PC-3 (cell line): ENCODE measurements at regions of chr3 and their contacts with region 1.

Region 1: DNA sequence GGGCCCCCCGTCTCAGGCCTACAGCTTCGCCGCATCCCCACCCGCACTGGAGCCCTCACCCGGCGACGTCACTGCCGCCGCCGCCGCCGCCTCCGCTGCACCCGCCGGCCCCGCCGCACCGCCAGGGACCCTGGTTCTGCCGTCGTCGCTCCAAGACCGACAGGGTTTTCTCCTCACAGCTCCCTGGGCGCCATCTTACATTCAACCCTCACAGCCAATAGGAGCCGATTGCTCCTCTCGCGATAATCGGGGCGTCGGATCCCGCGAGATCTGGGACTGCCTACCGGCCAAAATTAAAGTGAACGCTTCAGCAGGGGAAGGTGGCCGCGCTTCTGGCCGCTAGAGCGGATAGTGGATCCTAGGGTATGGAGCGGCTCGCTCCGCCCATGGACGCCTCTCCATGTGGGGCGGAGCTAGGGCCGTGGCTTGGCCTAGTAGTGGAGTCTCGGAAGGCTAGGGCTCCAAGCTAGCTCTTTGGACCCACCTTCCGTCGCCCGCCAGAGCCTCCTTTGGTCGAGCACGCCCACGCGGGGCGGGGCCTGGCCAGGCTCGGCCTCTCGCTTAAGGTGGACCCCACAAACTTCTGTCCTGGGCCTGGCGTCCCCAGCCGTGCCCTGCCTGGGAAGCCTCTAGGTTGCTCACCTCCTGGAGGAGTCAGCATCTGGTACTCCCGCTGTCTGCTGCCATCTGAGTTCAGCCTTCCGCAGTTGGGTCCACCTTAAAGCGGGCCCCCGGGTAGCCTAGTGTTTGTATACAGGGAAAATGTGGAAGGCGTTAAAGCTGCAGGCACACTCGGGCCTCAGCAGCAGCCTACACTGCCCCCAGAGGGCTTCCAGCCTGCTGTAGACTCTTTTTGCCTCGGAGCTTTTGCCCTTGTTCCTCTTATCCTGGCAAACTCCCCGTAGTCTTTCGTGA is at the start of gene QRICH1:
- DNase-seq: peak; percentile 99
- ATAC-seq: peak; percentile 84
- H3K4me3 ChIP-seq: peak within 1 kb of the TSS; percentile 90
- H3K27ac ChIP-seq: peak within 1 kb of the TSS; percentile 80
- H3K4me1 ChIP-seq: peaks cover 13% of the 10 kb centered on the region
- H3K27me3 ChIP-seq: no peaks in the 10 kb centered on the region
- CTCF ChIP-seq: peak; percentile 62
- total RNA-seq, gene QRICH1: 90.2 and 124 TPM in 2 replicates

Region 2: DNA sequence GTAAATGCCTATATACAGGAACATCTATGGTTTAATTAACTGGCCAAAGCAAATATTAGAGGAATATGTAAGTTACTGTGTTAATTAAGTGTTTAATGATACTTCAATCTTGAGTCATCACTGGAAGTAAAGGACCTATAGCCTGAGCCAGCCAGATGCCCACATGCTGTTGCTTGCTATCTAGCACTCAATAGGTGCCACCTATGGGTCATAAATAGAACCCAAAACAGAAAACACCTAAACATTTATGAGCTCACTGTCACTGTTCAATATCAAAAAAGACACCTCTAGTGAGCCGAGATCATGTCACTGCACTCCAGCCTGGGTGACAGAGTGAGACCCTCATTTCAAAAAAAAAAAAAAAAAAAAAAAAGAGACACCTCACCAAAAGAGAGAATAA is 328.7 kb before region 1 on chr3:
- CTCF ChIA-PET with region 1: interaction called, 15 read pairs
- POLR2A ChIA-PET with region 1: no interaction called
- intact Hi-C with region 1: no loop called
- DNase-seq: peak; percentile 49
- ATAC-seq: peak; percentile 97
- H3K4me3 ChIP-seq: no peak overlapping the region
- H3K27ac ChIP-seq: no peak overlapping the region
- H3K4me1 ChIP-seq: no peaks in the 10 kb centered on the region
- H3K27me3 ChIP-seq: no peaks in the 10 kb centered on the region
- CTCF ChIP-seq: peak; percentile 64

Region 3: GRCh38 chr3:49021813-49022687 is 72.1 kb before region 1 on chr3 and contains the start of gene NDUFAF3:
- CTCF ChIA-PET with region 1: interaction called, 6 read pairs
- POLR2A ChIA-PET with region 1: interaction called, 6 read pairs
- intact Hi-C with region 1: loop called (anchors 5 kb)
- DNase-seq: peak; percentile 95
- ATAC-seq: peak; percentile 53
- H3K4me3 ChIP-seq: peak within 1 kb of the TSS; percentile 94
- H3K27ac ChIP-seq: peak within 1 kb of the TSS; percentile 95
- H3K4me1 ChIP-seq: peaks cover 35% of the 10 kb centered on the region; the same call in 1 of the 2 replicates
- H3K27me3 ChIP-seq: no peaks in the 10 kb centered on the region
- CTCF ChIP-seq: peak; percentile 86
- total RNA-seq, gene NDUFAF3: 191 and 211 TPM in 2 replicates

Region 4: DNA sequence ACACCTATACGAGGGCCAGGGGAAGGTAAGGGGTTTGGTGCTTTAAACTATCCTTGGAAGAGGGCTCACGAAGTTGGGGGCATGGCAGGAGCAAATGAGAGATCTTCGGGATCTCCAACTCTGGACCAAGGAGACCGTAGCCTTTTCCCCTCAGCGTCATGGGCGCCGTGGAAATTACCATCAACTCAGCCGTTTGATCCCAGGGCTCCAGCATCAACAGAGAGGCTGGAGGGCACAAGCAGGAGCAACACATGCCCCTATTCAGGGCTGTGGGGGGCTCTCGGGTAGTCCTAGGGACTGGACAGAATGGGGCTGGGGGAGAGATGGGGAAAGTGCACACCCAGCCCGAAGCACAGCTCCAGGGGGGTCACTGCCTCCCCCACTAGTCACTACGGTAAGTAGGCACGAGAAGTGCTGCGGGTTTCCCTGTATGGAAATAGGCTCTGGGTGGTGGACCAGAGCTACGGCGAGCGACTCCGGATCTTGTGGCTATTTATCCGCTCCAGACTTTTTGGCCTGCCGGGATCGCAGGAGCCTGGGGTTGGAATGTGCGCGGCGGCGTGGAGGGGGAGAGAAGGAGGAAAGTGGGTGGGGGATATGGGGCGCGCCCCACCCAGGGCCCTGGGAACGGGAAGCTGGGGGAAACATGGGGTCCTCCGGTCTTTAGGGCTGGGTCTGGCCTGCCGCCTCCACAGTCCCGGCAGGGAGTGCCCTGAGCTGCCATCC is 39.3 kb after region 1 on chr3:
- CTCF ChIA-PET with region 1: interaction called, 4 read pairs
- POLR2A ChIA-PET with region 1: interaction called, 3 read pairs
- intact Hi-C with region 1: loop called (anchors 1 kb)
- DNase-seq: peak; percentile 90
- ATAC-seq: peak; percentile 76
- H3K4me3 ChIP-seq: peak overlapping the region; percentile 91
- H3K27ac ChIP-seq: peak overlapping the region; percentile 93
- H3K4me1 ChIP-seq: peaks cover 12% of the 10 kb centered on the region
- H3K27me3 ChIP-seq: no peaks in the 10 kb centered on the region
- CTCF ChIP-seq: no peak

Region 5: GRCh38 chr3:49411968-49412631 is 318.0 kb after region 1 on chr3 and contains the starts of genes RHOA and TCTA:
- CTCF ChIA-PET with region 1: no interaction called
- POLR2A ChIA-PET with region 1: interaction called, 3 read pairs
- intact Hi-C with region 1: loop called (anchors 1 kb)
- DNase-seq: peak; percentile 100
- ATAC-seq: peak; percentile 93
- H3K4me3 ChIP-seq: peak within 1 kb of the TSS; percentile 85
- H3K27ac ChIP-seq: peak within 1 kb of the TSS; percentile 66
- H3K4me1 ChIP-seq: peaks cover 32% of the 10 kb centered on the region
- H3K27me3 ChIP-seq: no peaks in the 10 kb centered on the region
- CTCF ChIP-seq: no peak
- total RNA-seq, gene RHOA: 278 and 292 TPM in 2 replicates
- total RNA-seq, gene TCTA: 23.7 and 25.4 TPM in 2 replicates